ENCODE measurements at regions of chr6 and their contacts with region 1.

Region 1: DNA sequence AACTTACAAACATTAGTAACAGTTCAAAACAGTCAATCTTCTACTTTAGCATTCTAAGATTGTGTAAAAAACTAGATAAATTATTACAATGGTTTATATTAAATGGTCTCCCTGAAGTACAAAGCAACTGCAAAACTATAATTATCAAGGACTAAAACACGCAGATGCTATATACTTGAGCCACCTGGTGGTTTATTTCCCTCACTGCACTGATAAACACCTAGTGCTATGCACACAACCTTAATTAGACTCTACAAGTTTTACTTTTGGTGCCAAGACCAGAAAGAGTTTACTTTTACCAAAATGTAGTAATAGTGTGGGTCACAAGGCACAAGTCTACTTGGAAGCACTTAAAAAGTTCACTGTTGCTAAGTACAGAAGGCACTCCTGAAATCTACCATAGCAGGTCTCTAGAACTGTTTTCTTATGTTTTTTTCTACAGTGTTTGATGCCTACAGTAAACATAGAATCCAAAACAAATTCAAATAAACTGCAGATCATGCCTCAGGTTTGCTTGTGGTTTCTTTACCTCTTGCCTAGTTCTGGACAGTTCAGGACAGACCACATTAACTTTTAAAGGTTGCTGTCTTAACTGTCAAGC is 49.2 kb downstream of the GMDS start:
- DNase-seq: no peak
- ATAC-seq: peak; percentile 65
- H3K4me3 Mint-ChIP-seq: no peak overlapping the region
- H3K27ac Mint-ChIP-seq: no peak overlapping the region
- H3K4me1 Mint-ChIP-seq: no peaks in the 10 kb centered on the region
- H3K27me3 Mint-ChIP-seq: no peaks in the 10 kb centered on the region
- CTCF ChIP-seq: peak; percentile 33

Region 2: GRCh38 chr6:1596088-1596852 is 599.9 kb before region 1 on chr6:
- CTCF ChIA-PET with region 1: interaction called, 18 read pairs
- POLR2A ChIA-PET with region 1: no interaction called
- intact Hi-C with region 1: loop called (anchors 1 kb)
- DNase-seq: peak; percentile 50
- ATAC-seq: peak; percentile 87
- H3K4me3 Mint-ChIP-seq: no peak overlapping the region
- H3K27ac Mint-ChIP-seq: no peak overlapping the region
- H3K4me1 Mint-ChIP-seq: peaks cover 4% of the 10 kb centered on the region
- H3K27me3 Mint-ChIP-seq: peaks cover 49% of the 10 kb centered on the region
- CTCF ChIP-seq: no peak

Region 3: DNA sequence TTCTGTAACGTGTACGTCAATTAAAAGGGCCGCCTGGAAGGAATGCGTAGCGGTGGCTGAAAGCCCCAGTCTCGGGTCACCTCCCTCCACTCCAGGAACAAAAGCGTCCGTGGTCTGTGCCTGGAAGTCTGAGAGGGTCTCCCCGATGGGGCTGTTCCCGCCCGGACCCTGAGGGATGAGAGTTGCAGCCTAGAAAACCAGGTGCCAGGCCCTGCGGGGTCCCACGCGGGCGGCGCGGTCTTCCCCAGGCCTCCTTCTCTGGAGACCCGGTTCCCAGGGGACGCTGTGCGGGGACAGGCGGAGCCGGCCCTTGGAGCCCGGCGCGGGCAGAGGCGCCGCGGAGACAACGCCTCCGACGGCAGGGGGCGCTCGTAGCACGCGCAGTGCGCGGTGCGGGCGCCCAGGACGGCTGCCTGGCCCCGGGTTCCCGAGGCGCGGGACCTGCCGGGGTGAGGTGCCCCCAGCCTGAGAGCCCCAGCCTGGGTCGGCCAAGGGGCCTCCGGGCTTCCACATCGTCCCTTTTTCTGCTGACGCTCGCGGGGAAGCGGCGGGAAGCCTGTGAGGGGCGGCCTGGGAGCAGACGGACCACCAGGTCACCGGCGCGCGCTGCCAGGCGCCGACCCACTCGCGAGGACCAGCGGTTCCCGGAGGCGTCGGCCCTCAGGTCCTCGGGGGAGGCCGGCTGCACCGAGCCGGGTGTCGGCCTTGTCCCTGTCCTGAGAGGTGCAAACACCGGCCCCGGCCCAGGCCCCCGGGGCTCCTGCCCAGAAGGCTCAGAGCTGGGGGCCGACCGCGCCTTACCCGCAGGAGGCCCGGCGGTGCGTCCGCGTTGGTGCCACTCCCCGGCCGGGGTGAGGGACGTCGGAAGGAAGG is 591.8 kb before region 1 on chr6:
- CTCF ChIA-PET with region 1: interaction called, 5 read pairs
- POLR2A ChIA-PET with region 1: no interaction called
- intact Hi-C with region 1: loop called (anchors 1 kb)
- DNase-seq: peak; percentile 80
- ATAC-seq: peak; percentile 76
- H3K4me3 Mint-ChIP-seq: no peak overlapping the region
- H3K27ac Mint-ChIP-seq: no peak overlapping the region
- H3K4me1 Mint-ChIP-seq: peaks cover 34% of the 10 kb centered on the region
- H3K27me3 Mint-ChIP-seq: peaks cover 73% of the 10 kb centered on the region
- CTCF ChIP-seq: no peak

Region 4: DNA sequence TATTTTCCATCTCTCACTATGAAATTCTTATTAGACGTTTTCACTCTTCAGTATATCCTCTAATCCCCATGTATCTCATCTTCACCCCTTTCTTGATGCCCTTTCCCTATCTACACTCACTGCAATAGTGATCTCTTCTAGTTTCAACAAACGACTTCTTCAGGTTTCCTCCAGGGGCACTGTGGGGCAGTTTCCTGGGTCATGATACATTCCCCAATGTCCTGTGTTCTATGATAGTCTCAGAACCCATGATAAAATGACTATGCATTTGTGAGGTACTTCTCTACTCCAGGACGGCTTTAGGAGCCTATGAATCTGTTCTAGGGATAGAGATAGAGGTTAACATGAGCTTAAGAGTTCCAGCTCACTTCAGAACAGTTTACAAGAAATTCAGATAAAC is 403.2 kb before region 1 on chr6:
- CTCF ChIA-PET with region 1: no interaction called
- POLR2A ChIA-PET with region 1: no interaction called
- intact Hi-C with region 1: loop called (anchors 2 kb)
- DNase-seq: no peak
- ATAC-seq: peak; percentile 60
- H3K4me3 Mint-ChIP-seq: no peak overlapping the region
- H3K27ac Mint-ChIP-seq: no peak overlapping the region
- H3K4me1 Mint-ChIP-seq: peaks cover 14% of the 10 kb centered on the region
- H3K27me3 Mint-ChIP-seq: no peaks in the 10 kb centered on the region
- CTCF ChIP-seq: no peak

Region 5: GRCh38 chr6:2127484-2127911 is 68.7 kb before region 1 on chr6:
- CTCF ChIA-PET with region 1: no interaction called
- POLR2A ChIA-PET with region 1: no interaction called
- intact Hi-C with region 1: loop called (anchors 2 kb)
- DNase-seq: peak; percentile 37
- ATAC-seq: peak; percentile 80
- H3K4me3 Mint-ChIP-seq: peak overlapping the region; percentile 48
- H3K27ac Mint-ChIP-seq: peak overlapping the region; percentile 70
- H3K4me1 Mint-ChIP-seq: peaks cover 24% of the 10 kb centered on the region
- H3K27me3 Mint-ChIP-seq: no peaks in the 10 kb centered on the region
- CTCF ChIP-seq: no peak

Region 6: DNA sequence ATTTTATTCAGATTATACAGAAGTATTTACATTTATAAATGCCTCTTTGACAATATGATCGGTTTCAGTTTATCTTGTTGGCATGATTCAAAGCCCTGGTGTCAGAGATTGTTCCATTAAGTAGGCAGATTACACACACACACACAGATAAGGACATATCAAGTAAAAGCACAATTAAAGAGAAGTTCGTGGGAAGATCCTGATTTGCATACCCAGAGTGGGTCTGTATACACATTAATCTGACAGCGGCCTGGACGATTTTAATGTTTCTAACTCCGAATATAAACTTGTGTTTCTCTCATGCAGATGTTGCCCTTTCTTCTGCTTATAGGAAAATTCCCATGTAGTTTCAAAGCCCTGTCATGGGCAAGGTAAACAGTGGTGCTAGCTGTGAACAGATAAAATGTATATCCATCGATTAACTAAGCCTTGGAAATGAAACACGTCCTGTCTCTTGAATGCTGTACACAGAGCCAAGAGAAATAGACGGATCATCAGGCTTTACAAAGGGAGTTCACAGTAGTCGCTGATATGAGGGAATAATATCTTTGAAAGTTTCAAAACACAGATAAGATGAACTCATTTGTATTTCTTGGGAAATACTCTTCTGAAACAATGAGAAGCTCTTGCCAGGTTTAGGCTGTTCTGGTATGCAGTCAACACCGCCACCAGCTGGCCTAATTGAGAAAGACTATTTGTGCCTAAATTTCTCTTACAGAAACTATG is 157.4 kb after region 1 on chr6:
- CTCF ChIA-PET with region 1: interaction called, 4 read pairs
- POLR2A ChIA-PET with region 1: no interaction called
- intact Hi-C with region 1: loop called (anchors 1 kb)
- DNase-seq: no peak
- ATAC-seq: no peak
- H3K4me3 Mint-ChIP-seq: no peak overlapping the region
- H3K27ac Mint-ChIP-seq: no peak overlapping the region
- H3K4me1 Mint-ChIP-seq: no peaks in the 10 kb centered on the region
- H3K27me3 Mint-ChIP-seq: no peaks in the 10 kb centered on the region
- CTCF ChIP-seq: no peak

Region 7: GRCh38 chr6:2448820-2449571 is 252.8 kb after region 1 on chr6:
- CTCF ChIA-PET with region 1: no interaction called
- POLR2A ChIA-PET with region 1: no interaction called
- intact Hi-C with region 1: loop called (anchors 5 kb)
- DNase-seq: no peak
- ATAC-seq: no peak
- H3K4me3 Mint-ChIP-seq: peak overlapping the region; percentile 67
- H3K27ac Mint-ChIP-seq: no peak overlapping the region
- H3K4me1 Mint-ChIP-seq: peaks cover 8% of the 10 kb centered on the region
- H3K27me3 Mint-ChIP-seq: no peaks in the 10 kb centered on the region
- CTCF ChIP-seq: no peak